Left cardiac atrium (tissue), 4 donors: ENCODE measurements at regions of chr17 and their contacts with region 1.

Region 1: GRCh38 chr17:56715613-56716357 is 117.9 kb downstream of the C17orf67 start:
- DNase-seq: peak; percentile 82
- ATAC-seq: peak; percentile 90 to 92

Region 2: GRCh38 chr17:55845385-55845784 is 870.4 kb before region 1 on chr17:
- intact Hi-C with region 1: loop called in 1 of 2 experiments (anchors 5 kb)
- DNase-seq: peak; percentile 60
- ATAC-seq: peak; percentile 94

Region 3: GRCh38 chr17:56499799-56500388 is 215.9 kb before region 1 on chr17:
- intact Hi-C with region 1: loop called (anchors 5 to 10 kb)
- DNase-seq: no peak
- ATAC-seq: no peak

Region 4: GRCh38 chr17:56592487-56593085 is 123.2 kb before region 1 on chr17:
- intact Hi-C with region 1: loop called (anchors 1 to 5 kb)
- DNase-seq: peak; percentile 63
- ATAC-seq: peak; percentile 79 to 81

Region 5: DNA sequence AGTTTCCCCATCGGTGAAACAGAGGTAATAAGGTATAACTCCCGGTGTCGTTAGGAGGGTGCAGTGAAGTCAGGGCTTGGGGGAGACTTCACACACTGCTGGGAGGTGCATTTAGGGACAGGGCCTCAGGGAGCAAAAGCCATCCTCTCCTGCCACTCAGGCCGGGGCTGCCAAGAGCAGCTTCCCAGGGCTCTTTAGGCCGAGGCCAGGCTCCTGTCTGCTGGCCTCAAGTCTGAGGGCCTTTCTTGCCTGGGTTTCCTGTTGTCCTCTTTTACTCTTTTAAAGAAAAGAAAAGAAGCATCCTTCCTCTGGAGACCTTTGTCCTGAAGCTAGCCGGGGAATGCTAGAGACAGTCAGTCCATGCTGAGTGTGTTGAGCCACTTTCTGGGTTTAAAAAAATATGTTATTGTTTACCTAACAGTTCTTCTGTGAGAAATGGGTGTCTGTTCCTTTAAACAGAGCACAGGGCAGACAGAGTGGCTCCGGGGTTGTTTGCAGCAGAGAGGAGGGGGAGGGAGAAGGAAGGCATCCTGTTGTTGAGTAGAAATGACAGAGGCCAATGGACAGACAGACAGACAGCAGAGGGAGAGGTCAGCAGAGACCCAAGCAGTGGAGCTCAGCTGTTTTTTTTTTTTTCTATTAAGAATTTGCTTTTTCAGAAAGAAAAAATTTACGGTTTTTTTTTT is 38.9 kb after region 1 on chr17:
- intact Hi-C with region 1: no loop called
- DNase-seq: no peak
- ATAC-seq: no peak